ENCODE measurements at regions of chr7 and their contacts with region 1.

Region 1: GRCh38 chr7:134514663-134515062 is 12.7 kb upstream of the AKR1B10 start:
- DNase-seq: peak; percentile 93
- ATAC-seq: peak; percentile 4; the same call in 1 of the 2 replicates
- H3K4me3 ChIP-seq: no peak overlapping the region
- H3K27ac ChIP-seq: peak overlapping the region; percentile 96
- H3K4me1 ChIP-seq: peaks cover 55% of the 10 kb centered on the region
- H3K27me3 ChIP-seq: no peaks in the 10 kb centered on the region
- CTCF ChIP-seq: peak; percentile 80

Region 2: DNA sequence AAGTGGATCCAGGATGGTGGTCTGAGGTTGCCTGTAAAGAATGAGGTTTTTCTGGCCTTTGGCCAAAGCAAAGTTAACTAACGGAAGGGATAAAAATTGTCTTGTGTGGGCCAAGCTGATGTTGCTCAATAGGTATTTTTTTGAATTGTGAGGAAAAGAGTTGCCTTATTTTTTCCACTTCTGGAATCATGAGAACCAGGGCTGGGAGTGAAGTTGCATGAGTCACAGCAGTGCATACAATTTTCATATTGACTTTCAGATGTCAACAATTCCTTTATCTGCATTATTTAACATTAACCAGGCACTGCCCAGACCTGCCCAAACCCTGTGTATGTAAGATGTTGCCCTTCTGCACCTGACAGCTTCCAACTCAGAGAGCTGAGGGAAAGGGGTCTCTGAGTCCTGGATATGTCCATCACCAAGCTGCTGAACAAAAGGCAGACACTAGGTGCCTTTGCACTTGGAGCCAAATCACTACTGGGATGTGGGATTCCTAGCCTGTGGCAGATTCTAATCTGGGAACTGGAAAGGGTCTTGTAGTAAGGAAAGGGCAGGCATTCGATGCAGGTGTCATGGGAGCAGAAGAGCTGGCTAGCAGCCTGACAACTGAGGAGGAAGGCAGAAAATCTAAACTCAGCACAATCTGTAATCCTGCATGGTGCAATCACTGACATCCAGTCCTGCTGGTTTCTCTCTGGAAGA is 145.7 kb before region 1 on chr7:
- CTCF ChIA-PET with region 1: no interaction called
- POLR2A ChIA-PET with region 1: no interaction called
- intact Hi-C with region 1: loop called (anchors 2 kb)
- DNase-seq: peak; percentile 95
- ATAC-seq: peak; percentile 68
- H3K4me3 ChIP-seq: peak overlapping the region; percentile 37; the same call in 1 of the 2 replicates
- H3K27ac ChIP-seq: peak overlapping the region; percentile 96
- H3K4me1 ChIP-seq: peaks cover 55% of the 10 kb centered on the region
- H3K27me3 ChIP-seq: no peaks in the 10 kb centered on the region
- CTCF ChIP-seq: no peak

Region 3: GRCh38 chr7:134444198-134444871 is 70.3 kb before region 1 on chr7:
- CTCF ChIA-PET with region 1: interaction called, 6 read pairs
- POLR2A ChIA-PET with region 1: no interaction called
- intact Hi-C with region 1: loop called (anchors 1 kb)
- DNase-seq: peak; percentile 74
- ATAC-seq: peak; percentile 81
- H3K4me3 ChIP-seq: no peak overlapping the region
- H3K27ac ChIP-seq: 0 out of 2 replicates have a peak overlapping the region, but pooled peaks have one; percentile 2
- H3K4me1 ChIP-seq: peaks cover 37% of the 10 kb centered on the region
- H3K27me3 ChIP-seq: no peaks in the 10 kb centered on the region
- CTCF ChIP-seq: peak; percentile 76

Region 4: DNA sequence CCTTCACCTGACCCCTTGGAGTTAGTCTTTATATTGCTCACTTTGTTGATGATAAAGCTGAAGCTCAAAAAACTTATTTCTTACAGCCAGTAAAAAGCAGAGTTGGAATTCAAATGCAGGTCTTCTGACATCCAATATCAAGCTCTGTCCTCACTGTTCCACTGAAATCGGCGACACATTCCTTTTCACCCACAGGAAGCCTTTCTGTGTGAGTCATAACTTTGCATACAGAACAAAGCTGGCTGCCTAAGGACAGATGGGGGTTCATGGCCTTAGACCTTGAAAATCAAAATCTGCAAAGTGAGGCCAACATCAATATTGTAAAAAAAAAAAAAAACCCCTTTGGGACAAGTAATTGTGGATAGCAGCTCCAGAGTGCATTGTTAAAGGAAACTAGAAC is 33.9 kb before region 1 on chr7:
- CTCF ChIA-PET with region 1: interaction called, 6 read pairs
- POLR2A ChIA-PET with region 1: no interaction called
- intact Hi-C with region 1: loop called (anchors 1 kb)
- DNase-seq: peak; percentile 78
- ATAC-seq: peak; percentile 97
- H3K4me3 ChIP-seq: no peak overlapping the region
- H3K27ac ChIP-seq: no peak overlapping the region
- H3K4me1 ChIP-seq: peaks cover 16% of the 10 kb centered on the region
- H3K27me3 ChIP-seq: no peaks in the 10 kb centered on the region
- CTCF ChIP-seq: no peak

Region 5: DNA sequence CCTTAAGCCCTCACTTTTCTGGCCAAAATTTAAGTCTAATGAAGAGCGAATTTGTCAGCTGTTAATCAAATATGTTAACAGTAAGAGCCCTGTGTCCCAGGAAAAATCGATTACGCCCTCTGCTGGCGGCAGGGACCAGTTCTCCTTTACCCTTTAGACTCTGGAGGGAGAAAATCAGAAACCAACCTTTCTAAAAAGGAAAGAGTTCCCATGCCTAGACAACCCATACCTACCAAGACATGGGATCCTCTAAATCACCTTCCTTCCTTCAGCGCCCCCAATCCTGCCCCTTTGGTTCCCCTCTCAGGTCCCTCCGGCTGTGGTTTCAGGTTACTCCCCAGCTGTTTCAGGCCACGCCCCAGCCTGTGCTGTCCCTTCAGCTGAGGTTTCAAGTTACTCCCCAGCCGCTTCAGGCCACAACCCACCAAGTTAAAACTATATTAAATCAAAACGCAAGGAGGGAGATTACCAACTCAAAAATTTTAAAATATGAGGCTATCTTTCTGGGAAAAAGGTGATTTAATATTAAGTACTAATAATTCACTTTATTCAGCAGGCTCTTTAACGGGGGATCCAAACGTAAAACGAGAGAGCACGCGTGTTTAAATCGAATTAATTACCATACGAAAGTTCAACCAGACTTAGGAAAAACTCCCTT is 32.9 kb after region 1 on chr7:
- CTCF ChIA-PET with region 1: no interaction called
- POLR2A ChIA-PET with region 1: no interaction called
- intact Hi-C with region 1: loop called (anchors 1 kb)
- DNase-seq: peak; percentile 74
- ATAC-seq: peak; percentile 94
- H3K4me3 ChIP-seq: peak overlapping the region; percentile 62
- H3K27ac ChIP-seq: peak overlapping the region; percentile 43
- H3K4me1 ChIP-seq: peaks cover 28% of the 10 kb centered on the region
- H3K27me3 ChIP-seq: no peaks in the 10 kb centered on the region
- CTCF ChIP-seq: peak; percentile 96